H1 (cell line): ENCODE measurements at regions of chr14 and their contacts with region 1.

Region 1: GRCh38 chr14:67467179-67468080 is 21.1 kb downstream of the TMEM229B start:
- DNase-seq: no peak
- H3K4me3 ChIP-seq: no peak overlapping the region
- H3K27ac ChIP-seq: no peak overlapping the region
- H3K4me1 ChIP-seq: peaks cover 0 to 2% (median 0%) of the 10 kb centered on the region in 4 experiments; a peak in 1 of 7 replicates
- H3K27me3 ChIP-seq: no peaks in the 10 kb centered on the region; a peak in 1 of 7 replicates
- CTCF ChIP-seq: peak in 2 of 3 experiments; percentile 28 to 52; a peak in 2 of 4 replicates
- EP300 ChIP-seq: no peak
- POLR2A ChIP-seq: no peak
- RAD21 ChIP-seq: no peak; a peak in 1 of 4 replicates

Region 2: GRCh38 chr14:67446120-67447032 is 21.1 kb before region 1 on chr14:
- CTCF ChIA-PET with region 1: interaction called, 17 read pairs
- POLR2A ChIA-PET with region 1: no interaction called
- DNase-seq: no peak
- H3K4me3 ChIP-seq: no peak overlapping the region
- H3K27ac ChIP-seq: no peak overlapping the region
- H3K4me1 ChIP-seq: peaks cover 0 to 22% (median 10%) of the 10 kb centered on the region in 4 experiments; a peak in 6 of 7 replicates
- H3K27me3 ChIP-seq: no peaks in the 10 kb centered on the region; a peak in 1 of 7 replicates
- CTCF ChIP-seq: no peak
- EP300 ChIP-seq: no peak
- POLR2A ChIP-seq: no peak
- RAD21 ChIP-seq: no peak

Region 3: GRCh38 chr14:67479974-67480373 is 12.5 kb after region 1 on chr14:
- CTCF ChIA-PET with region 1: interaction called, 41 read pairs
- POLR2A ChIA-PET with region 1: no interaction called
- DNase-seq: no peak
- H3K4me3 ChIP-seq: no peak overlapping the region
- H3K27ac ChIP-seq: no peak overlapping the region
- H3K4me1 ChIP-seq: no peaks in the 10 kb centered on the region
- H3K27me3 ChIP-seq: no peaks in the 10 kb centered on the region
- CTCF ChIP-seq: no peak
- EP300 ChIP-seq: no peak
- POLR2A ChIP-seq: no peak
- RAD21 ChIP-seq: no peak

Region 4: DNA sequence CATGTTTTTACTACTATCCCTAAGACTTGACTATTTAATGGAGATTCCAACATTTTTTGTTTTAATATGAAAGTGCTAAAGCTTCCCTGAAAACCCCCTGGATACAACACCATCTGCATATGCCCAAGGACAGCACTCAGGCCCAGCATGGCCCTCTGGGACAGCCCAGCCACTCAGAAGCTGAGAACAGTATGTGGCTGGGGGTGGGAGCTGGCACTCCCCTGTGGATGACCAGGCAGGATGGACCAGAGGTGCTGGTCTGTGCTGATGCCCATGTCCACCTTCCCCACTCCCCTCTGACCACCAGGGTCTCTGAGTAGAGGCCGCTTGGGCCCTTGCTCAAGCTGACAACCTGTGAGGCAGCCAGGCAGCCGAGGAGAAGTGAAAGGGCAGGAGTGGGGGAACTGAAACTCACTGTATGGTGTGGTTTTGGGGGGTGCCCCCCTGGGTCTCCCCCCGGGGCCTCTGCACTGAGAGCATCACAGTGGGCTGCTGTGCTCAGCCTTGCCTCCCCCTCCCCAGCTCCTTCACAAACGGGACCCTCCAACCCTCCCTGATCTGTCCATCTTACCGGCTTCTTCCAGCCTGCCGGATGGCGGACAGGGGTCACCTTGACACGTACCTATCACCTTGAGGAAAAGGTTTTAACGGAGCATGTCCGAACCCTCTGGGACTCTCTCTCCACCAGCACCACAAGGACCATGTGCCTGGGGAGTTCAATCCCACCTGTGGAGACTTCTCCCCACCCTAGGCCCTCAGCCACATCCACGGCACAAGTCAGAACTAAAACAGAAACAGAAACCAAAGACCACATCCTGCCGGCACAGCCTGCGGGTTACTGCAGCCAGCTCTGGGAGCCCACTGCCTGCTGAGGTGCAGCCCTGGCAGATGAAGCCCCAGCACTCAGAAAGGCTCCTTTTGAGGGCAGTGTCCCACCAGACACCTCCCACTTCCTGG is 20.8 kb after region 1 on chr14 and contains the start of gene TMEM229B:
- CTCF ChIA-PET with region 1: interaction called, 18 read pairs
- POLR2A ChIA-PET with region 1: interaction called, 3 read pairs
- DNase-seq: no peak
- H3K4me3 ChIP-seq: no peak within 1 kb of the TSS
- H3K27ac ChIP-seq: no peak within 1 kb of the TSS
- H3K4me1 ChIP-seq: peaks cover 0 to 10% (median 5%) of the 10 kb centered on the region in 4 experiments; a peak in 4 of 7 replicates
- H3K27me3 ChIP-seq: no peaks in the 10 kb centered on the region
- CTCF ChIP-seq: no peak
- EP300 ChIP-seq: no peak
- POLR2A ChIP-seq: no peak
- RAD21 ChIP-seq: no peak
- total RNA-seq, gene TMEM229B: 0.50 and 0.73 TPM in 2 replicates